MCF 10A (cell line): ENCODE measurements at regions of chr9 and their contacts with region 1.

Region 1: DNA sequence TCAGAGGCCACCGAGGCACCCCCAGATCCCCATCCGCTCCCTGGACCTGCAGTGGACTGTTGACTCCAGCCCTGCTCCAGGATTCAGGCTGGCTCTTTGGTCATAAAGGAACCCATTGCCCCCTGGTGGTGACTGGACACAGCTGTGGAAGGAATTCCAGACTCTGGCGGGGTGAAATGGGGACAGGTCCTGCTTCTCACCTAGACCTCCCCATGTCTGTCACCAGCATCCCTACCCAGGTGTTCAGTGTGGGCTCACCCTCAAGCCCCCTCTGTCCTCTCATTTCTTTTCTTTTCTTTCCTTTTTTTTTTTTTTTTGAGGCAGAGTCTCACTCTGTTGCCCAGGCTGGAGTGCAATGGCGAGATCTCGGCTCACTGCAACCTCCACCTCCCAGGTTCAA is 25.5 kb upstream of the STXBP1 start:
- DNase-seq: peak; percentile 85
- H3K4me3 Mint-ChIP-seq: no peak overlapping the region
- H3K27ac Mint-ChIP-seq: no peak overlapping the region
- H3K4me1 Mint-ChIP-seq: peaks cover 21% of the 10 kb centered on the region
- H3K27me3 Mint-ChIP-seq: no peaks in the 10 kb centered on the region
- CTCF ChIP-seq: peak; percentile 88

Region 2: GRCh38 chr9:127423934-127424675 is 162.4 kb before region 1 on chr9 and contains the start of gene ZNF79:
- CTCF ChIA-PET with region 1: no interaction called
- POLR2A ChIA-PET with region 1: no interaction called
- intact Hi-C with region 1: loop called (anchors 10 kb)
- DNase-seq: peak; percentile 92
- H3K4me3 Mint-ChIP-seq: peak within 1 kb of the TSS; percentile 99
- H3K27ac Mint-ChIP-seq: peak within 1 kb of the TSS; percentile 98
- H3K4me1 Mint-ChIP-seq: peaks cover 21% of the 10 kb centered on the region
- H3K27me3 Mint-ChIP-seq: no peaks in the 10 kb centered on the region
- CTCF ChIP-seq: no peak
- total RNA-seq, gene ZNF79: 7.9 and 9.3 TPM in 2 replicates

Region 3: DNA sequence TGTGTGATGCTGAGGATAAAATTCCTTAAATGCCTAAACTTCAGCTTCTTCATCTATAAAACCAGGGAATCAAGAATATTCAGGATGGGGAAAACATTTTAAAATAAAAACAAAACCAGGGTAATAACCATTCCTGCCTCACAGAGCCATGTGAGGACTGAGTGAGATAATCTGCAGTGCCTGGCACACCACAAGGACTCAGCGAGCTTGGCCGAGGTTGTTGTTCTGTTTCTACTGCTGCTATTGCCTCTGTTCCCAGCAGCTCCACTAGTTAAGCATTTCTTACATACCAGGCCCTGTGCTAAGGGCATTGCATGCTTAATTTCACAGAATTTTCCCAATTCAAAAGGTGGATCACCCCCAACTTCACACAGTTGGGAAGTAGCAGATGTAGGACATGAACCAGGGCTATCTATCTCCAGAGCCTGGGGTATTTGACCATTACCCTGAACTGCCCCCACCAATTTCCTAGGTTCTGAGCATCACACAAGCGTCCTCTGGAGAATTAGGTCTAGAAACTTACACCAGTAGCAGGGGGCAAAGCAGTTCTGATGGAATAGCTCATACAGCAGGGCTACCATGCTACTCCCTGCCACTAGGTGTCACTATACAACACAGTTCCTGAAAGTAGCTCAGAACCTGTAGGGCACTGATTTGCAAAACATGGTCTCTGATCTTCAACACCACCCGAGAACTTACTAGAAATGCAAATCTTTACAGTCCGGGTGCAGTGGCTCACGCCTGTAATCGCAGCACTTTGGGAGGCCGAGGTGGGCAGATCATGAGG is 60.9 kb before region 1 on chr9:
- CTCF ChIA-PET with region 1: interaction called, 14 read pairs
- POLR2A ChIA-PET with region 1: interaction called, 10 read pairs
- intact Hi-C with region 1: no loop called
- DNase-seq: no peak
- H3K4me3 Mint-ChIP-seq: no peak overlapping the region
- H3K27ac Mint-ChIP-seq: peak overlapping the region; percentile 31
- H3K4me1 Mint-ChIP-seq: peaks cover 24% of the 10 kb centered on the region
- H3K27me3 Mint-ChIP-seq: no peaks in the 10 kb centered on the region
- CTCF ChIP-seq: peak; percentile 44

Region 4: DNA sequence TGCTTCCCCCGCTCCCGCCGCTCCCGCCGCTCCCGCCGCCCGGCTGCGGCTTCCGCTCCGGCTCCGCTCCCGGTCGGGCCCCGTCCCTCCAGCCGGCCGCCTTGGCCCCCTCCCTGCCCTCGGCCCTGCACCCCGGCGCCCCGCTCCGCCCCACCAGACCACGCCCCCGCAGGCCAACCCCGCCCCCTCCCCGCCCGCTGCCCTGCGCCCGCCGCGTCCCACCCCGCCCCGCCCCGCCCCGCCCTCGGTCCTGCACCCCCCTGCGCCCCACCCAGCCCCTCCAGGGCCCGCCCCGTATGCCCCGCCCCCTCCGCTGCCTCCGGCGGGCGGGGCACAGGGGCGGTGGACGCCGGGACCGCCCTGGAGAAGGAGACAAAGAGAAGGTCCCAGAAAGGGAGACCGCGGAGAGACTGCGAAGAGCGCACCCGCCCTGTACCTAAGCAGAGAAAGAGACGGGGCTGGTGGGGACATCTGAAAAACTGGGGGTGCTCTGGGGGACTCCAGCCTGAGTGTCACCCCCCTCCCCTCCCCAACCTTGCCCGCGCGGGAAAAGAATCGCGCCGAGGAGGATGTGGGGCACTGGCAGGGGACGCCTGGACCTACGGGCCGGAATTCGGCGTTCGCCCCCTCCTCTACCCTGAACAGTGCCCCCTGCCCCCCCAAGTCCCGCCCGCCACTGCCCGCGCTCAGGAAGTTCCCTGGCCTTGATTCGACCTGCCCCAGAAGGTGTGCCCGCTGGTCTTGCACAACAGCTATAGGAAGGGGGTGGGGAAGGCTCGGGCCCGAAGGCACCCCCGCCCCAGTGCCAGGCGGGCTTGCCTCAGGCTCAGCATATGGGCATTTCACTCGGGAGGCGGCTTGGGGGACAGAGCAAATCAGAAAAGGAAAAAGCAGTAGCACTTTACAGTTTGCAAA is 17.3 kb before region 1 on chr9:
- CTCF ChIA-PET with region 1: interaction called, 7 read pairs
- POLR2A ChIA-PET with region 1: interaction called, 58 read pairs
- intact Hi-C with region 1: loop called (anchors 2 kb)
- DNase-seq: peak; percentile 86
- H3K4me3 Mint-ChIP-seq: peak overlapping the region; percentile 98
- H3K27ac Mint-ChIP-seq: peak overlapping the region; percentile 55
- H3K4me1 Mint-ChIP-seq: peaks cover 32% of the 10 kb centered on the region
- H3K27me3 Mint-ChIP-seq: no peaks in the 10 kb centered on the region
- CTCF ChIP-seq: no peak

Region 5: GRCh38 chr9:127785023-127785932 is 198.7 kb after region 1 on chr9:
- CTCF ChIA-PET with region 1: interaction called, 6 read pairs
- POLR2A ChIA-PET with region 1: no interaction called
- intact Hi-C with region 1: loop called (anchors 1 kb)
- DNase-seq: peak; percentile 76
- H3K4me3 Mint-ChIP-seq: peak overlapping the region; percentile 90
- H3K27ac Mint-ChIP-seq: peak overlapping the region; percentile 63
- H3K4me1 Mint-ChIP-seq: peaks cover 9% of the 10 kb centered on the region
- H3K27me3 Mint-ChIP-seq: no peaks in the 10 kb centered on the region
- CTCF ChIP-seq: peak; percentile 92